HAP-1 (cell line): ENCODE measurements at regions of chr4 and their contacts with region 1.

Region 1: GRCh38 chr4:175891851-175892250 is 79.8 kb upstream of the GPM6A start:
- DNase-seq: peak in 1 of 2 experiments; percentile 47
- H3K4me3 ChIP-seq: no peak overlapping the region
- H3K4me1 ChIP-seq: no peaks in the 10 kb centered on the region
- H3K27me3 ChIP-seq: no peaks in the 10 kb centered on the region

Region 2: DNA sequence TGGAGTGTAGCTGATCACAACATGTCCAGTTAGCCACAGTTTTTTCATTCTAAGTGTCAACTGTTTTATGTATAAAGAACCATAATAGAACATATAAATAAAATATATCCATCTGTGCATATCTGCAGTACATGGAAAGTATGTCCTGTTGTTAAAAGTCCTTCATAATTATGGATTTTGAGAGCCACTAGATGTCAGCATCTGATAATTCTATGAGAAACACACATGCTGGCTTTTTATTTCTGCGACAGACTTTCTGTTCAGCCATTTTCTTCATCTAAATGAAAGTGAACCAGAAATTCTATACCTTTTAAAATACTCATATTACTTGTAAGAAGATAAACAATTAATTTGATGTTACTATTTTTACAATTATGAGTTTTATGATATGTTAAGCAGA is 331.2 kb before region 1 on chr4:
- in situ Hi-C with region 1: loop called (anchors 10 kb)
- DNase-seq: peak in 1 of 2 experiments; percentile 47
- H3K4me3 ChIP-seq: no peak overlapping the region
- H3K4me1 ChIP-seq: no peaks in the 10 kb centered on the region
- H3K27me3 ChIP-seq: peaks cover 3% of the 10 kb centered on the region; the same call in 1 of the 2 replicates

Region 3: GRCh38 chr4:176198316-176198903 is 306.6 kb after region 1 on chr4:
- in situ Hi-C with region 1: no loop called
- DNase-seq: no peak
- H3K4me3 ChIP-seq: no peak overlapping the region
- H3K4me1 ChIP-seq: peaks cover 3% of the 10 kb centered on the region
- H3K27me3 ChIP-seq: no peaks in the 10 kb centered on the region